ENCODE measurements at regions of chr7 and their contacts with region 1.

Region 1: GRCh38 chr7:82319674-82320118 is 123.9 kb downstream of the CACNA2D1 start:
- DNase-seq: peak; percentile 93
- ATAC-seq: peak; percentile 95

Region 2: GRCh38 chr7:82194016-82194643 is 125.6 kb before region 1 on chr7:
- intact Hi-C with region 1: no loop called
- DNase-seq: no peak
- ATAC-seq: peak; percentile 49

Region 3: GRCh38 chr7:82443547-82444219 is 124.0 kb after region 1 on chr7 and contains the start of gene CACNA2D1:
- intact Hi-C with region 1: loop called (anchors 5 kb)
- DNase-seq: peak; percentile 89
- ATAC-seq: peak; percentile 95
- total RNA-seq, gene CACNA2D1: 38.5 TPM

Measured in Right ventricle myocardium superior (tissue), 1 donor.